GM12878 (cell line): ENCODE measurements at regions of chr4 and their contacts with region 1.

Region 1: DNA sequence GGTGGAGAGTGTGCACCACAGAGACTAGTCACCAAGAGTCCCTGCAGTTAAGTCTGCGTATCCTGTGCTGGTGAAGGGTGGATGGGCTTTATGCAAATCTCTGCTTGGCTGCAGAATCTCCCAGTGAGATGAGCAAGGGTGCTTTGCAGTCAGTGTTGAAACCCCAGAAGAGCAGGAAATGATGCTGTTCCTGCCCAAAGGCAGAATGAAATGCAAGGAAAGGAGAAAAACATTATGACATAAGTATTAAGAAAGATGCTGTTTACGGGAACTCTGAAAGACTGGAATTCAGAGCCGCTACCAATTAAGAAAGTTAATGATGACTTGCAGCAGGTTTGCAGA is 25.4 kb upstream of the ACSL1 start:
- DNase-seq: peak; percentile 81
- ATAC-seq: peak; percentile 76
- H3K4me3 ChIP-seq: peak overlapping the region; percentile 38
- H3K27ac ChIP-seq: peak overlapping the region; percentile 54
- H3K4me1 ChIP-seq: peaks cover 63% of the 10 kb centered on the region
- H3K27me3 ChIP-seq: no peaks in the 10 kb centered on the region
- CTCF ChIP-seq: no peak
- EP300 ChIP-seq: peak; percentile 40 to 41; a peak in 3 of 4 replicates
- POLR2A ChIP-seq: no peak
- RAD21 ChIP-seq: no peak

Region 2: GRCh38 chr4:184627765-184628480 is 223.2 kb before region 1 on chr4:
- CTCF ChIA-PET with region 1: no interaction called
- POLR2A ChIA-PET with region 1: no interaction called
- RAD21 ChIA-PET with region 1: no interaction called
- SMC1A ChIA-PET with region 1: no interaction called
- in situ Hi-C with region 1: no loop called
- intact Hi-C with region 1: no loop called
- DNase-seq: no peak
- ATAC-seq: no peak
- H3K4me3 ChIP-seq: no peak overlapping the region
- H3K27ac ChIP-seq: no peak overlapping the region
- H3K4me1 ChIP-seq: no peaks in the 10 kb centered on the region
- H3K27me3 ChIP-seq: no peaks in the 10 kb centered on the region
- CTCF ChIP-seq: no peak
- EP300 ChIP-seq: no peak
- POLR2A ChIP-seq: no peak
- RAD21 ChIP-seq: no peak

Region 3: GRCh38 chr4:184825896-184826690 is 25.1 kb before region 1 on chr4 and contains the start of gene ACSL1:
- CTCF ChIA-PET with region 1: interaction called, 8 read pairs
- POLR2A ChIA-PET with region 1: interaction called, 15 read pairs
- RAD21 ChIA-PET with region 1: interaction called, 47 read pairs
- SMC1A ChIA-PET with region 1: interaction called, 18 read pairs
- in situ Hi-C with region 1: no loop called
- intact Hi-C with region 1: loop called (anchors 1 kb)
- DNase-seq: no peak
- ATAC-seq: peak; percentile 70
- H3K4me3 ChIP-seq: peak within 1 kb of the TSS; percentile 77
- H3K27ac ChIP-seq: peak within 1 kb of the TSS; percentile 90
- H3K4me1 ChIP-seq: peaks cover 22% of the 10 kb centered on the region
- H3K27me3 ChIP-seq: no peaks in the 10 kb centered on the region
- CTCF ChIP-seq: 0 out of 6 replicates have a peak, but pooled peaks of 1 of the 3 experiments have one; percentile 4
- EP300 ChIP-seq: no peak
- POLR2A ChIP-seq: peak; percentile 88
- RAD21 ChIP-seq: no peak
- polyA plus RNA-seq, gene ACSL1: 30.7 to 32.6 TPM

Region 4: GRCh38 chr4:184833046-184833818 is 17.9 kb before region 1 on chr4:
- CTCF ChIA-PET with region 1: interaction called, 5 read pairs
- POLR2A ChIA-PET with region 1: interaction called, 4 read pairs
- RAD21 ChIA-PET with region 1: no interaction called
- SMC1A ChIA-PET with region 1: interaction called, 21 read pairs
- in situ Hi-C with region 1: no loop called
- intact Hi-C with region 1: no loop called
- DNase-seq: no peak
- ATAC-seq: peak; percentile 50; the same call in 2 of the 3 replicates
- H3K4me3 ChIP-seq: no peak overlapping the region
- H3K27ac ChIP-seq: no peak overlapping the region
- H3K4me1 ChIP-seq: no peaks in the 10 kb centered on the region
- H3K27me3 ChIP-seq: no peaks in the 10 kb centered on the region; a peak in 1 of 4 replicates
- CTCF ChIP-seq: no peak
- EP300 ChIP-seq: no peak
- POLR2A ChIP-seq: no peak
- RAD21 ChIP-seq: no peak

Region 5: GRCh38 chr4:184838249-184839074 is 12.7 kb before region 1 on chr4:
- CTCF ChIA-PET with region 1: interaction called, 5 read pairs
- POLR2A ChIA-PET with region 1: no interaction called
- RAD21 ChIA-PET with region 1: no interaction called
- SMC1A ChIA-PET with region 1: interaction called, 21 read pairs
- in situ Hi-C with region 1: no loop called
- intact Hi-C with region 1: no loop called
- DNase-seq: no peak
- ATAC-seq: no peak
- H3K4me3 ChIP-seq: no peak overlapping the region
- H3K27ac ChIP-seq: no peak overlapping the region
- H3K4me1 ChIP-seq: no peaks in the 10 kb centered on the region
- H3K27me3 ChIP-seq: no peaks in the 10 kb centered on the region
- CTCF ChIP-seq: no peak
- EP300 ChIP-seq: no peak
- POLR2A ChIP-seq: no peak
- RAD21 ChIP-seq: no peak

Region 6: DNA sequence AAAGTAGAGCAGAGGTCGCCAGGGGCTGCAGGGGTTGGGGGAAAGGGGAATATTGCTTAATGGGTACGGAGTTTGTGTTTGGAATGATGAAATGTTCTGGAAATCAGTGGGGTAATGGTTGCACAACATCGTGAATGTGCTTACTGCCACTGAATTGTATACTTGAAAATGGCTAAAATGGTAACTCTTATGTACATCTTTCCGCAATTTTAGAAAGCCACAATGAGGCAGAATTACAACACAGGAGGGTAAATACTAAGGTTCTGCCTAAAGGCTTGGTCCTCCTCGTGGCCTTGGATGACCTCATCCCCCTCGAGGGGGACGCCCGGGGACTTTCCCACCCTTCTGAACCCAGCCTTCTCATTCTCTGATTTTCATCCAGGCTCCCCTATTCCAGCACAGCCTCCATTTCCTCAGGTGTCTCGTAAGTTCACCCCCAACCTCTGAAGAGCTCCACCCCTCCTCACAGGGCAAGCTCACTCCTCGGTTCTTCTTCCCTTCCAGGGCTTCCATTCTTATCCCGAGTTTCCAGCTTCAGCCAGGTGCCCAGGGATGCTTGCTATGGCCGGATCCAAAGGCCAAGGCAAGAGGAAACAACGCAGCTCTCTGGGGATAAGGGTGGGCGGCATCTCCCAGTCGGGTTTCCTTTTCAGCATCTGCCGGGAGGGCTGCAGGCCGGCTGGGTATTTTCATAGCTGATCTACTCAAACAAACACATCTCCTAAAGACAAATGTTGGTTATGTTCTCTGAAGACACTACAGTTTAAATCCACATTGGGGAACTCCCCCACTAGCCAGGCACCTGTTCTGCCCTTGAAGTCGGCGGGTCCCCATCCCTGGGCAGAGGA is 45.9 kb after region 1 on chr4:
- CTCF ChIA-PET with region 1: no interaction called
- POLR2A ChIA-PET with region 1: interaction called, 3 read pairs
- RAD21 ChIA-PET with region 1: interaction called, 17 read pairs
- SMC1A ChIA-PET with region 1: interaction called, 4 read pairs
- in situ Hi-C with region 1: no loop called
- intact Hi-C with region 1: no loop called
- DNase-seq: no peak
- ATAC-seq: peak; percentile 88
- H3K4me3 ChIP-seq: peak overlapping the region; percentile 47; the same call in 1 of the 2 replicates
- H3K27ac ChIP-seq: no peak overlapping the region; the same call in 1 of the 2 replicates
- H3K4me1 ChIP-seq: peaks cover 13% of the 10 kb centered on the region
- H3K27me3 ChIP-seq: no peaks in the 10 kb centered on the region
- CTCF ChIP-seq: no peak
- EP300 ChIP-seq: no peak
- POLR2A ChIP-seq: no peak
- RAD21 ChIP-seq: no peak

Region 7: GRCh38 chr4:184907216-184907615 is 56.0 kb after region 1 on chr4:
- CTCF ChIA-PET with region 1: interaction called, 5 read pairs
- POLR2A ChIA-PET with region 1: no interaction called
- RAD21 ChIA-PET with region 1: interaction called, 6 read pairs
- SMC1A ChIA-PET with region 1: interaction called, 10 read pairs
- in situ Hi-C with region 1: no loop called
- intact Hi-C with region 1: no loop called
- DNase-seq: no peak
- ATAC-seq: peak; percentile 84
- H3K4me3 ChIP-seq: no peak overlapping the region
- H3K27ac ChIP-seq: no peak overlapping the region
- H3K4me1 ChIP-seq: no peaks in the 10 kb centered on the region
- H3K27me3 ChIP-seq: no peaks in the 10 kb centered on the region; a peak in 1 of 4 replicates
- CTCF ChIP-seq: peak; percentile 30 to 57 (median 34); a peak in 3 of 6 replicates
- EP300 ChIP-seq: no peak
- POLR2A ChIP-seq: no peak
- RAD21 ChIP-seq: peak; percentile 74